Naive thymus-derived CD4-positive, alpha-beta T cell (primary cell): ENCODE measurements at regions of chr3 and their contacts with region 1.

Region 1: GRCh38 chr3:9422712-9423424 is 25.5 kb downstream of the SETD5 start:
- DNase-seq: peak in 7 of 9 donors; percentile 20 to 46 (median 37)
- ATAC-seq: peak; percentile 86
- H3K4me3 ChIP-seq: no peak overlapping the region
- H3K4me3 Mint-ChIP-seq: peak overlapping the region in 4 of 10 donors; percentile 2 to 26 (median 4)
- H3K27ac ChIP-seq: peak overlapping the region; percentile 26
- H3K27ac Mint-ChIP-seq: peak overlapping the region; percentile 23 to 91 (median 84)
- H3K4me1 ChIP-seq: peaks cover 0 to 9% of the 10 kb centered on the region in 2 donors
- H3K4me1 Mint-ChIP-seq: peaks cover 23 to 63% (median 56%) of the 10 kb centered on the region in 7 donors
- H3K27me3 ChIP-seq: no peaks in the 10 kb centered on the region
- H3K27me3 Mint-ChIP-seq: no peaks in the 10 kb centered on the region

Region 2: GRCh38 chr3:9352917-9353752 is 69.7 kb before region 1 on chr3:
- CTCF ChIA-PET with region 1: interaction called, 13 read pairs
- POLR2A ChIA-PET with region 1: no interaction called
- intact Hi-C with region 1: loop called (anchors 1 kb)
- DNase-seq: peak; percentile 21 to 57 (median 51)
- ATAC-seq: peak; percentile 85
- H3K4me3 ChIP-seq: no peak overlapping the region
- H3K4me3 Mint-ChIP-seq: no peak overlapping the region
- H3K27ac ChIP-seq: no peak overlapping the region
- H3K27ac Mint-ChIP-seq: peak overlapping the region in 2 of 9 donors; percentile 13 to 17
- H3K4me1 ChIP-seq: no peaks in the 10 kb centered on the region
- H3K4me1 Mint-ChIP-seq: peaks cover 4 to 13% (median 5%) of the 10 kb centered on the region in 7 donors
- H3K27me3 ChIP-seq: no peaks in the 10 kb centered on the region
- H3K27me3 Mint-ChIP-seq: peaks cover 0 to under 1% (median 0%) of the 10 kb centered on the region in 5 donors

Region 3: GRCh38 chr3:9384141-9384853 is 38.6 kb before region 1 on chr3:
- CTCF ChIA-PET with region 1: no interaction called
- POLR2A ChIA-PET with region 1: no interaction called
- intact Hi-C with region 1: loop called (anchors 5 kb)
- DNase-seq: no peak
- ATAC-seq: no peak
- H3K4me3 ChIP-seq: no peak overlapping the region
- H3K4me3 Mint-ChIP-seq: no peak overlapping the region
- H3K27ac ChIP-seq: no peak overlapping the region
- H3K27ac Mint-ChIP-seq: peak overlapping the region in 8 of 9 donors; percentile 1 to 79 (median 46)
- H3K4me1 ChIP-seq: no peaks in the 10 kb centered on the region
- H3K4me1 Mint-ChIP-seq: peaks cover 5 to 39% (median 23%) of the 10 kb centered on the region in 7 donors
- H3K27me3 ChIP-seq: no peaks in the 10 kb centered on the region
- H3K27me3 Mint-ChIP-seq: no peaks in the 10 kb centered on the region